ENCODE measurements at regions of chrX and their contacts with region 1.

Region 1: DNA sequence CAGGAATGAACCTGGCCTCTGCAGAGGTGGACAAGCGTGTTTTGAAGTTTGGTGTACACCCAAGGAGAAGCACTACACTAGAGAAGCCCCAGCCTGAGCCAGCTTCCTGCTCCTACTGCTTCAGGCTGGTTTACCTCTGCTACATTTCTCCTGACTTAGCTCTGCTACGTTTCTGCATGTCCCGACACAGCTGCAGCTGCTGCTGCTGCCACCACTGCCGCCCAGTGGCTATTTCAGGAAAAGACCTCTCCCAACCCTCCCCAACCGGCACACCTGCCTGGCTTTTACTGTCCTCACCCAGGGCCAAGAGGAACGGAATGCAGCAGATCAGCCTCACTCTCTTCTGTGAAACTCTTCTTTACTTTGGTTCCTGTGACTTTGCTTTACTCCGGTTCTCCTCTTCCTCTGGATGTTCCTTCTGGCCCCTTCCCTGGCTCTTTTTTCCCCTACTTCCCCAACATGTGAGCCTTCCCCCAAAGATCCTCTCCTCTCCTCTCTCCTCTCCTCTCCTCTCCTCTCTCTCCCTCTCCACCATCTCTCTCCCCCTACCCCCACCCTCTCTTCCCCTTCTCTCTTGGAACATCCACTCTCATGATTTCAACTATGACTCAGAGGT is 3.1 kb upstream of the P2RY4 start:
- DNase-seq: peak; percentile 23
- ATAC-seq: peak; percentile 97
- H3K4me3 ChIP-seq: no peak overlapping the region
- H3K27ac ChIP-seq: no peak overlapping the region
- H3K4me1 ChIP-seq: no peaks in the 10 kb centered on the region
- H3K27me3 ChIP-seq: no peaks in the 10 kb centered on the region
- CTCF ChIP-seq: peak; percentile 80
- EP300 ChIP-seq: no peak
- POLR2A ChIP-seq: no peak
- RAD21 ChIP-seq: peak; percentile 52

Region 2: DNA sequence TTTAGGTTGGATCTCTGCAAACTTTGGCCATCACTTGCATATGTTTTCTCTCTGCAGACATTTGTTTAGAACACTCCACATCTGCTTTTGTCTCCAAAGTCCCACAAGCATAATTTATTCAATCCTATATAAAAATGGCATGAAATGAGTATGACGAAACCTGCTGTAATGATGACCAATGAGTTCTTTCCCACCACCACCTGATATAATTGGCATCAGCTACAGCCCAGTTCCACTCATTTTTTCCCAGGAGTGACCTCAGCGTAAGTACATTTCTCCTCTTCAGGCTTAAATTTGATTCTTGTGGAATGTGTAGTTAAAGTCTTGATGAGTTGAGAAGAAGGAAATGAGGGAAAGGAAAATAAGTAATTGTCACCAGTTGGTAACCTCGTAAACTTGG is 418.4 kb before region 1 on chrX:
- CTCF ChIA-PET with region 1: no interaction called
- POLR2A ChIA-PET with region 1: no interaction called
- in situ Hi-C with region 1: no loop called
- intact Hi-C with region 1: no loop called
- DNase-seq: no peak
- ATAC-seq: no peak
- H3K4me3 ChIP-seq: no peak overlapping the region
- H3K27ac ChIP-seq: no peak overlapping the region
- H3K4me1 ChIP-seq: no peaks in the 10 kb centered on the region
- H3K27me3 ChIP-seq: no peaks in the 10 kb centered on the region
- CTCF ChIP-seq: no peak
- EP300 ChIP-seq: no peak
- POLR2A ChIP-seq: no peak
- RAD21 ChIP-seq: no peak

Region 3: GRCh38 chrX:70133303-70134115 is 129.6 kb before region 1 on chrX and contains the start of gene IGBP1:
- CTCF ChIA-PET with region 1: no interaction called
- POLR2A ChIA-PET with region 1: no interaction called
- in situ Hi-C with region 1: no loop called
- intact Hi-C with region 1: loop called (anchors 1 kb)
- DNase-seq: peak; percentile 90
- ATAC-seq: peak; percentile 95
- H3K4me3 ChIP-seq: peak within 1 kb of the TSS; percentile 69 to 78 (median 78)
- H3K27ac ChIP-seq: peak within 1 kb of the TSS; percentile 97
- H3K4me1 ChIP-seq: peaks cover 38% of the 10 kb centered on the region
- H3K27me3 ChIP-seq: no peaks in the 10 kb centered on the region; a peak in 1 of 5 replicates
- CTCF ChIP-seq: peak; percentile 80
- EP300 ChIP-seq: no peak
- POLR2A ChIP-seq: peak; percentile 62 to 67
- RAD21 ChIP-seq: 0 out of 2 replicates have a peak, but pooled peaks have one; percentile 35
- total RNA-seq, gene IGBP1: 59.3 and 79.4 TPM in 2 replicates

Region 4: GRCh38 chrX:70196961-70197805 is 65.9 kb before region 1 on chrX:
- CTCF ChIA-PET with region 1: interaction called, 17 read pairs
- POLR2A ChIA-PET with region 1: no interaction called
- in situ Hi-C with region 1: loop called (anchors 10 kb)
- intact Hi-C with region 1: loop called (anchors 1 kb)
- DNase-seq: peak; percentile 51
- ATAC-seq: peak; percentile 70
- H3K4me3 ChIP-seq: no peak overlapping the region
- H3K27ac ChIP-seq: no peak overlapping the region
- H3K4me1 ChIP-seq: no peaks in the 10 kb centered on the region
- H3K27me3 ChIP-seq: no peaks in the 10 kb centered on the region
- CTCF ChIP-seq: peak; percentile 67
- EP300 ChIP-seq: no peak
- POLR2A ChIP-seq: no peak
- RAD21 ChIP-seq: no peak

Region 5: GRCh38 chrX:70208479-70208878 is 54.6 kb before region 1 on chrX:
- CTCF ChIA-PET with region 1: no interaction called
- POLR2A ChIA-PET with region 1: no interaction called
- in situ Hi-C with region 1: loop called (anchors 10 kb)
- intact Hi-C with region 1: no loop called
- DNase-seq: no peak
- ATAC-seq: no peak
- H3K4me3 ChIP-seq: no peak overlapping the region
- H3K27ac ChIP-seq: no peak overlapping the region
- H3K4me1 ChIP-seq: no peaks in the 10 kb centered on the region
- H3K27me3 ChIP-seq: no peaks in the 10 kb centered on the region; a peak in 1 of 5 replicates
- CTCF ChIP-seq: no peak
- EP300 ChIP-seq: no peak
- POLR2A ChIP-seq: no peak
- RAD21 ChIP-seq: no peak